Activated B cell treated with CpG ODN at 0.5 μM for 24 hours (primary cell): ENCODE measurements at regions of chr2 and their contacts with region 1.

Region 1: GRCh38 chr2:20291106-20291564 is 59.5 kb downstream of the PUM2 start:
- DNase-seq: no peak
- ATAC-seq: peak; percentile 56
- H3K4me3 Mint-ChIP-seq: no peak overlapping the region
- H3K27ac Mint-ChIP-seq: no peak overlapping the region
- H3K4me1 Mint-ChIP-seq: no peaks in the 10 kb centered on the region
- H3K27me3 Mint-ChIP-seq: no peaks in the 10 kb centered on the region
- CTCF ChIP-seq: no peak

Region 2: GRCh38 chr2:19955544-19956422 is 335.4 kb before region 1 on chr2:
- CTCF ChIA-PET with region 1: no interaction called
- POLR2A ChIA-PET with region 1: interaction called, 3 read pairs
- intact Hi-C with region 1: loop called (anchors 1 kb)
- DNase-seq: no peak
- ATAC-seq: peak; percentile 83
- H3K4me3 Mint-ChIP-seq: no peak overlapping the region
- H3K27ac Mint-ChIP-seq: no peak overlapping the region
- H3K4me1 Mint-ChIP-seq: no peaks in the 10 kb centered on the region
- H3K27me3 Mint-ChIP-seq: no peaks in the 10 kb centered on the region
- CTCF ChIP-seq: peak; percentile 80

Region 3: GRCh38 chr2:20273045-20273444 is 18.1 kb before region 1 on chr2:
- CTCF ChIA-PET with region 1: interaction called, 3 read pairs
- POLR2A ChIA-PET with region 1: interaction called, 3 read pairs
- intact Hi-C with region 1: loop called (anchors 2 kb)
- DNase-seq: no peak
- ATAC-seq: no peak
- H3K4me3 Mint-ChIP-seq: no peak overlapping the region
- H3K27ac Mint-ChIP-seq: no peak overlapping the region
- H3K4me1 Mint-ChIP-seq: peaks cover 3% of the 10 kb centered on the region
- H3K27me3 Mint-ChIP-seq: no peaks in the 10 kb centered on the region
- CTCF ChIP-seq: no peak

Region 4: GRCh38 chr2:20304411-20304810 is 13.3 kb after region 1 on chr2:
- CTCF ChIA-PET with region 1: no interaction called
- POLR2A ChIA-PET with region 1: interaction called, 5 read pairs
- intact Hi-C with region 1: loop called (anchors 2 kb)
- DNase-seq: no peak
- ATAC-seq: no peak
- H3K4me3 Mint-ChIP-seq: no peak overlapping the region
- H3K27ac Mint-ChIP-seq: no peak overlapping the region
- H3K4me1 Mint-ChIP-seq: no peaks in the 10 kb centered on the region
- H3K27me3 Mint-ChIP-seq: no peaks in the 10 kb centered on the region
- CTCF ChIP-seq: no peak